Activated naive CD4-positive, alpha-beta T cell treated with anti-CD3 and anti-CD28 coated beads for 36 hours (primary cell): ENCODE measurements at regions of chr14 and their contacts with region 1.

Region 1: GRCh38 chr14:20556500-20557211 is 4.2 kb downstream of the RNASE9 start:
- DNase-seq: no peak
- H3K4me3 Mint-ChIP-seq: no peak overlapping the region
- H3K27ac Mint-ChIP-seq: no peak overlapping the region
- H3K4me1 Mint-ChIP-seq: no peaks in the 10 kb centered on the region
- H3K27me3 Mint-ChIP-seq: no peaks in the 10 kb centered on the region

Region 2: DNA sequence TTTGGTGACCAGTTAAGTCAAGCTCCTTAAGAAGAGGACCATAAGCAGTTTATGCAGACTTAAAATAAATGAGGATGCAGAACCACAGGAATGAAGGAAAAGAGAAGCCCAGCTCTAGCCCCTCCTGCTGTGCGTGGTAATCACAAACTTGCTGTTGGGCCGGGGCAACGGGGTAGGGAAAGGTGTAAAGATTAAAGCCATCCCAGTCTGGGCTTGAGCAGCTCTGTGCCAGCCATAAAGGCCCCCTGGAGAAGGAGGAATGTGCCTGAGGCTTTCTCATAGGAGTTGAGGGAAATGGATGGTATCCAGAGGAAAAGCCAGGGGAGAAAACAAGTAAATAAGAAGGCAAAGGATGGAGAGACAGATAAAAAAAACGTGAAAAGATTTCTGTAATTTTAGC is 168.5 kb before region 1 on chr14:
- CTCF ChIA-PET with region 1: no interaction called
- intact Hi-C with region 1: no loop called
- DNase-seq: no peak
- H3K4me3 Mint-ChIP-seq: no peak overlapping the region
- H3K27ac Mint-ChIP-seq: no peak overlapping the region
- H3K4me1 Mint-ChIP-seq: no peaks in the 10 kb centered on the region
- H3K27me3 Mint-ChIP-seq: no peaks in the 10 kb centered on the region

Region 3: DNA sequence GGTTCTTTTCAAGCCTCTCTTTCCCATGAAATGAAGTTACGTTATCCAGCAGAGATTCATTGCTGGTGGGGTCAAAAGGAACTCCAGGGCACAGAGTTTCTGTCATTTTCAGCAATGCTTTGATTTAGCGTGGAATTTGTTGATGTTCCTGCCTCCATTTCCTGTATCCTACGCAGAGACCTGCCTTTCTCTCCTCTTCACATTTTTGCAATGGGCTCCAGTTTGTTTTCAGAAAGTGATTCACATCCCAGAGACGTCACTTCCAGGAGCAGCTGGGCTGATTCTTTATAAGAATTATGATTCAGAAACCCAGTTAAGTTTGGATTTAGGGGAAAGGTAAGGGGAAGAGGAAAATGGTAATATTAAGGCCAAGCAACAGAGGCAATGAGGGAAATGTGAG is 39.8 kb before region 1 on chr14:
- CTCF ChIA-PET with region 1: no interaction called
- intact Hi-C with region 1: loop called (anchors 5 kb)
- DNase-seq: no peak
- H3K4me3 Mint-ChIP-seq: no peak overlapping the region
- H3K27ac Mint-ChIP-seq: no peak overlapping the region
- H3K4me1 Mint-ChIP-seq: no peaks in the 10 kb centered on the region
- H3K27me3 Mint-ChIP-seq: no peaks in the 10 kb centered on the region